Dendritic cell treated with granulocyte-macrophage colony-stimulating factor and Interleukin-4, amounts not matched to agents 40 ng/mL and 50 ng/mL, for 4 days (primary cell): ENCODE measurements at regions of chr19 and their contacts with region 1.

Region 1: GRCh38 chr19:19192078-19192882 is at the starts of genes BORCS8 and RFXANK:
- H3K4me3 Mint-ChIP-seq: peak within 1 kb of the TSS; percentile 91
- H3K27ac Mint-ChIP-seq: peak within 1 kb of the TSS; percentile 99
- H3K4me1 Mint-ChIP-seq: peaks cover 48% of the 10 kb centered on the region
- H3K27me3 Mint-ChIP-seq: no peaks in the 10 kb centered on the region

Region 2: GRCh38 chr19:19115954-19116353 is 76.3 kb before region 1 on chr19:
- intact Hi-C with region 1: no loop called
- H3K4me3 Mint-ChIP-seq: no peak overlapping the region
- H3K27ac Mint-ChIP-seq: no peak overlapping the region
- H3K4me1 Mint-ChIP-seq: no peaks in the 10 kb centered on the region
- H3K27me3 Mint-ChIP-seq: peaks cover 4% of the 10 kb centered on the region

Region 3: DNA sequence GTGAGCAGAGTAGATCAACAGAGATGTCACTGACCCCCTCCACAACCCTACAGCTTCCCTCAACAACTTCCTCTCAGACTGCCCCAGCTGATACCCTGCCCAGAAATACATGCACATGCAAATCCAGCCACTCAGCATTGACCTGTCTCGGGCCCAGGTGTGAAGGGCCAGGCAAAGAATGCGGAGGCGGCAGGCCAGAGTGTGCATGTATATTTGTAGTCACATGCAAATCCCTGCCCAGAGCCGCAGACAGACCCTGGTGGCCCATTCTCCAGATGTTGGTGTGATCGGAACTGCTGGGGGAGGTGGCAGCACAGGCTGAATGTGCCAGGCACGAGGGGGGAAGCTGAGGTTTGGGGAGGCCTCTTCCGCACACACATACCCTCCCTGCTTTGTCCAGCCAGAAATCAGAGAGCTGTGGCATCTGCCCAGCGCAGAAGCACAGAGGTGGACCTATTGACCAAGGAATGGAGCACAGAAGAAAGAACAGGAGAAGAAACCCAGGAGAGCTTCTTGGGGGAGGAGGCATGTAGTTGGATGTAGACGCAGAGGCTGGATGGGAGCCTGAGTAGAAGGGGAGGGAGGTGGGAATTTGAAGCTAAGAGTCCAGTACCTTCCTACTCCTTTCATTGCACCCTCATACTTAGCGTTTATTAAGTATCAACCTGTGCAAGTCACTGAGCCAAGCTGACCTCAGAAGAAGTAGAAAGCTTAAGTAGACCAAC is 36.6 kb before region 1 on chr19:
- intact Hi-C with region 1: no loop called
- H3K4me3 Mint-ChIP-seq: no peak overlapping the region
- H3K27ac Mint-ChIP-seq: no peak overlapping the region
- H3K4me1 Mint-ChIP-seq: no peaks in the 10 kb centered on the region
- H3K27me3 Mint-ChIP-seq: no peaks in the 10 kb centered on the region

Region 4: DNA sequence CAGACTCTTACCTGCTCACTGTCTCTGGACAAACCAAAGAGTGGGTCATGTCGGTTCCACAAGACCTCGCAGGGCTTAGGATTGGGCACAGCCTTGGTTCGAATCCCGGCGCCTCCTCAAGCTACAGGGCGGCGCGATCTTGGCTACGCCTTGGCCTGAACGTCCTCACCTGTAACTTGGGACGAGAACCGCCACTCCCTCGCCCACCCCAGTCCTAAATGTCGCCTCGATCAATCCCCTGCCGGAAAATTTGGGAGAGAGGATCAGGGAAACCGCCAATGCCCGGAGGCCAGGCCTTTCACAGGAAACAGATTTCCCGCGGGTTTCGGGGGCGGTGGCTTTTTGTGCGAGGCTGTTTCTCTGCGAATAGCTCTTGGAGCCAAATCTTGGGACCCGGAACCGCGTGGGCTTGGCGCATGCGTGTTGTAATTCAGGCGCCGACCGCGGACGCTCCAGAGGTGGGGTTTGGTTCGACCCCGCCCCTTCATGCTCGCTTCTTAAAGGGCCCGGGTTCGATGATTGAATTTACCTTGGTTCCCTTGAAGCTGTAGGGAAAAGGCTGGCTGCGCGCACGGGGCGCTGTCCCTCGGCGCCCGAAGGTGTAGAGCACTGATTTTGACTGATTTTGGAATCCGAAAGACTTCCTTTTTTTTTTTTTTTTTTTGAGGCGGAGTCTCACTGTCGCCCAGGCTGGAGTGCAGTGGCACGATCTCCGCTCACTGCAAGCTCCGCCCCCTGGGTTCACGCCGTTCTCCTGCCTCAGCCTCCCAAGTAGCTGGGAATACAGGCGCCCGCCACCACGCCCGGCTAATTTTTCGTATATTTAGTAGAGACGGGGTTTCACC is 11.0 kb after region 1 on chr19 and contains the start of gene NR2C2AP:
- intact Hi-C with region 1: loop called (anchors 1 kb)
- H3K4me3 Mint-ChIP-seq: peak within 1 kb of the TSS; percentile 83
- H3K27ac Mint-ChIP-seq: peak within 1 kb of the TSS; percentile 88
- H3K4me1 Mint-ChIP-seq: peaks cover 40% of the 10 kb centered on the region
- H3K27me3 Mint-ChIP-seq: peaks cover 20% of the 10 kb centered on the region

Region 5: GRCh38 chr19:19224852-19225494 is 32.7 kb after region 1 on chr19:
- intact Hi-C with region 1: loop called (anchors 2 kb)
- H3K4me3 Mint-ChIP-seq: peak overlapping the region; percentile 72
- H3K27ac Mint-ChIP-seq: peak overlapping the region; percentile 30
- H3K4me1 Mint-ChIP-seq: peaks cover 11% of the 10 kb centered on the region
- H3K27me3 Mint-ChIP-seq: peaks cover 57% of the 10 kb centered on the region